Transverse colon (tissue), 4 donors: ENCODE measurements at regions of chrX and their contacts with region 1.

Region 1: GRCh38 chrX:111181951-111182350 is 86.0 kb downstream of the PAK3 start:
- DNase-seq: no peak
- H3K4me3 ChIP-seq: no peak overlapping the region
- H3K27ac ChIP-seq: no peak overlapping the region
- H3K4me1 ChIP-seq: no peaks in the 10 kb centered on the region
- H3K27me3 ChIP-seq: no peaks in the 10 kb centered on the region
- CTCF ChIP-seq: no peak
- EP300 ChIP-seq: no peak
- POLR2A ChIP-seq: no peak

Region 2: DNA sequence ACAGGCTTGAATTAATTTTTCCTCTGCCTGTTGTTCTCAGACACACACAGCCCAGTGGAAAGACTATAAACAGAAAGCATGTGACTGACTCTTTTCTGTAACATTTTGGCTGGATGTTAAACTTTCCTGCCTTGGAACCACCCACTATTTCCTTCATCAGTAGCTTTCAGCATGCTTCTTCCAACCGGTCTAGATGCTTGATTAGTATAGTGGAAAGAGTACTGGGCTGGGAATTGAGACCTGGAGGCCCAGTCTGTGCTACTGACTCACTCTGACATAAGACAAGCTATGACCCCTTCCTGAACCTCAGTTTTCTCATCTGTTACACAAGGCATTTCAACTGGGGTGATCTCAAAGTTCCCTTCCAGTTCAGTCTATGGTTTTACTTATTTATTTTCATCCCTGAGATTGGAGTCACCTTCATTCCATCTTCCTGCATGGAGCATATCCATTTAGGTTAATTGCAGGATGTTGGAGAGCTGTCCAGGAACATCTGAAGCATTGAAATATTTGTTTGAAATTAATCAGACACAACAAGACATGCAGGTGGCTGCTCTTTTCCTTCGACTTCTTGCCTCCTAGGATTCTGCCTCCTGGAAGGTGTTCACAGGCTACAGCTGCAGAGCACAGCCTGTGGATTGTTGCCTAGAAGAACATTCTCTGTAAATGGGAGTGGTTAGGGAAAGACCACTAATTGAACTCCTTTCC is 649.9 kb before region 1 on chrX:
- in situ Hi-C with region 1: no loop called
- intact Hi-C with region 1: loop called (anchors 5 kb)
- DNase-seq: no peak
- H3K4me3 ChIP-seq: no peak overlapping the region
- H3K27ac ChIP-seq: no peak overlapping the region
- H3K4me1 ChIP-seq: no peaks in the 10 kb centered on the region
- H3K27me3 ChIP-seq: no peaks in the 10 kb centered on the region
- CTCF ChIP-seq: no peak
- EP300 ChIP-seq: no peak
- POLR2A ChIP-seq: no peak

Region 3: DNA sequence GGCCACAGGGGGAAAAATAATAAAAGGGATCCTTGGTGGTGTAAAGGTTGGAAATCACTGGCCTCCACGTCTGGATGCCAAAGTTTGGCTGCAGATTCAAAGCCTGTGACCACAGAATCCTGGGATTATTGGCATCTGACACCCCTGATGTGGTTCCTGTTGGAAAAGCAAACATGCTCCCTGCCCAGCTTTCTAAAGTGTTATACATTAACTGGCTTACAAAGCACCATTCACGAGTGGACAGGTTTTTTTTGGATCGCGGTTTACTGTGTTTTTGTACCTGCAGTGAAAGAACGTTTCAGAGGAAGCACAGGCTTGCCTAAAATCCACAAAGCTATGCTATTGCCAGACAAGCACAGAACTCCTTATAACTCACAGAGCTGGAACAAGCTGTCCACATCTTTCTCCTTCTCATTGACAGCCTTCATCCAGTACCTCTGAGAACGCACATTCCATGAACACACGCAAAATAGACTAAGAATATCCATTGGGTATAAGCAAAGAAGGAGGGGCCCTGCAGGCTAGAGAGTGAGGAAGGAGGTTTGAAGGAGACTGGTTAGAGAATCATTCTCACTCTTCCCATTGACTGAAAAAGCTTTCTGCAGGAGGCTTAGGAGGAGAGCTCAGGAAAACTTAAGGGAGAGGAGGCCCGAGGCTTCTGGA is 102.8 kb after region 1 on chrX:
- in situ Hi-C with region 1: loop called in 1 of 4 experiments (anchors 25 kb)
- intact Hi-C with region 1: no loop called
- DNase-seq: no peak
- H3K4me3 ChIP-seq: no peak overlapping the region
- H3K27ac ChIP-seq: no peak overlapping the region
- H3K4me1 ChIP-seq: no peaks in the 10 kb centered on the region
- H3K27me3 ChIP-seq: no peaks in the 10 kb centered on the region
- CTCF ChIP-seq: no peak
- EP300 ChIP-seq: no peak
- POLR2A ChIP-seq: no peak